ENCODE measurements at regions of chr7 and their contacts with region 1.

Region 1: DNA sequence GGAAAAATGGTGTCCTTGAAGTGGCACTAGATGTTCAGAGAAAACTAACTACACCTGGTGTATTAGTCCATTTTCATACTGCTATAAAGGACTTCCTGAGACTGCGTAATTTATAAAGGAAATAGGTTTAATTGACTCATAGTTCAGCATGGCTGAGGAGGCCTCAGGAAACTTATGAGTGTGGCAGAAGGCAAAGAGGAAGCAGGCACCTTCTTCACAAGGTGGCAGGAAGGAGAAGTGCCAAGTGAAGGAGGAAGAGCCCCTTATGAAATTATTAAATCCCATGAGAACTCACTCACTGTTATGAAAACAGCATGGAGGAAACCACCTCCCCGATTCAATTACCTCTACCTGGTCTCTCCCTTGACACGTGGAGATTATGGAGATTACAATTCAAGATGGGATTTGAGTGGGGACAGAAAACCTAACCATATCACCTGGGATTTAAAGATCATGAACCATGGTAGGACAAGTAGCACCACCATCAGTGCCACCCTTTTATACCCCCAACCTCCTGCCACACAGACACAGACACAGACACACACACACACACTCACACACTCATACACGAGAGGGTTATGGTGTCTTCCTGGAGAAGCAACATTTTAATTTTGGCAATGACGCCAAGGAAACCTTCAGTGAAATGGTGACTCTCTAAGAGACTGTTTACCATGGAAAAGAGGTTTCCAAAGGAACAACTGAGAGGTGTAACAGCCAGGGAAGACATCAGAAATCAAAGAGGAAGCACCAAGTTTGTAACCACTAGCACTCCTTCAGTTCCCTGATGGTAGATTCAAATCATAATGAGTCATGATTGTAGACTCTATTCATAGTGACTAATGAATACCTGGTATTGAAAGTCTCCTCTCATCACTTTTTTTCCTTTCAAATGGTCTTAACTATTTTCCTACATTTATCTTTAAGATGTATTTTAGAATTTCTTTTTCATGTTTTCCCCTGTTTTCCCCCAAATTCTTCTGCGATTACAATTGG is 41.8 kb upstream of the WNT16 start:
- DNase-seq: no peak
- ATAC-seq: peak; percentile 87
- H3K4me3 Mint-ChIP-seq: peak overlapping the region; percentile 41
- H3K27ac Mint-ChIP-seq: peak overlapping the region; percentile 89
- H3K4me1 Mint-ChIP-seq: peaks cover 27% of the 10 kb centered on the region
- H3K27me3 Mint-ChIP-seq: no peaks in the 10 kb centered on the region
- CTCF ChIP-seq: no peak

Region 2: DNA sequence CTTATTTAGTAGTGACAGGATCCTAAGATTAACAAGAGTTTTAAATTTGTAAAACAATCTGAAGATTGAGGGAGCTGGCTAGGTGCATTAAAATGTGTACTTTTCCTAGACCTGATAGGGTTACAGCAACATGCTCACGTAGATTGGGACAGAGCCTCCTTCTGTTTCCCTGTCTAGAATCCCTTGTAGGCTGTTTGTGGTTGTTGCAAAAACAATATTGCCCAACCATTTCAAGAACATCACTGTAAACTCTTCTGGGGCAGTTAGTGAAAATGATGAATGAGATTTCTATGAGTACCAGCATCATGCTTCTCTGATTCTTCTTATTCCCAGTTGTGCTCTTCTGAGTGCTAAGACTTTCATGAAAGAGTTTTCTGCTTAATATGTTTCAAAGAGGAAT is 313.2 kb before region 1 on chr7:
- CTCF ChIA-PET with region 1: no interaction called
- POLR2A ChIA-PET with region 1: no interaction called
- intact Hi-C with region 1: no loop called
- DNase-seq: no peak
- ATAC-seq: no peak
- H3K4me3 Mint-ChIP-seq: no peak overlapping the region
- H3K27ac Mint-ChIP-seq: no peak overlapping the region
- H3K4me1 Mint-ChIP-seq: no peaks in the 10 kb centered on the region
- H3K27me3 Mint-ChIP-seq: no peaks in the 10 kb centered on the region
- CTCF ChIP-seq: no peak

Region 3: DNA sequence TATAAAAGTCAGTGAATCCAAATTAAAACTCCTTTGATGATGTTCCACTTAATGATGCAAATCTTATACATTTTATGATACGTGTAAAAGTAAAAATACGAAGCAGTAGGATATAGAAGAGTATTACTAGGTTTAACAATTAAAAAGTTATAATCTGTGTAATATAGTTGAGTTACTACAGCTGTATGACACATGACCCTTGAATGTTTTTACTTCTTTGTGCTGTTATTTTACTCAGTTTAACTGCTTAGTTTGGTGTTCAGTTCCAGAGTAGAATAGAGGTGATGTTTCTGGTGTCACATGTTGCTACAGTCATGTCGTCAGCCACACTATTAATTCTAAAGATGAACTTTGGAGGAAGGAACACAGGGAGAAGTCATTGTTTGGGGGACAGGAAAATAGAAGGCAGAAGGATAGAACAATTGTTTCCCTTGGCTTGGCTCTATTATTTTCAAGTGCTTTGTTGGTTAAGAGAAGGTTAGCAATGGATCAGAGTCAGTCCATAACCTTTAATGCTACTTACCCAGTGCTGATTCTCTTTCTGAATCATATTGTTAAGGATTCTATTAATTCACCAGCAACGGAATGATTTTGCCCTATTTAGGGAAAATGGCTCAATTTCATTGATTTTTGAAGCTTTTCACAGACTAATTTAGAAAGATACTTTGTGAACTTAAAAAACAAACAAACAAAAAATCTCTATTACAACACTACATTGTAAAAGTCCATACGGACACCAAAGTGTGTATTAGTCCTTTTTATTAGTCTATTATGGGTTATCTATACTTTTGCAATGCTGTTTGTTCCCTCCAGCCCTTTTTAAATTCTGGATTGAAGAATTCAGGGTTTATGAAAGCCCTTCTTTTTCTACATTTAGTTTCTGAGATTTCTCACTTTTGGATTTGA is 225.1 kb before region 1 on chr7:
- CTCF ChIA-PET with region 1: no interaction called
- POLR2A ChIA-PET with region 1: no interaction called
- intact Hi-C with region 1: no loop called
- DNase-seq: no peak
- ATAC-seq: no peak
- H3K4me3 Mint-ChIP-seq: no peak overlapping the region
- H3K27ac Mint-ChIP-seq: no peak overlapping the region
- H3K4me1 Mint-ChIP-seq: no peaks in the 10 kb centered on the region
- H3K27me3 Mint-ChIP-seq: no peaks in the 10 kb centered on the region
- CTCF ChIP-seq: no peak

Region 4: DNA sequence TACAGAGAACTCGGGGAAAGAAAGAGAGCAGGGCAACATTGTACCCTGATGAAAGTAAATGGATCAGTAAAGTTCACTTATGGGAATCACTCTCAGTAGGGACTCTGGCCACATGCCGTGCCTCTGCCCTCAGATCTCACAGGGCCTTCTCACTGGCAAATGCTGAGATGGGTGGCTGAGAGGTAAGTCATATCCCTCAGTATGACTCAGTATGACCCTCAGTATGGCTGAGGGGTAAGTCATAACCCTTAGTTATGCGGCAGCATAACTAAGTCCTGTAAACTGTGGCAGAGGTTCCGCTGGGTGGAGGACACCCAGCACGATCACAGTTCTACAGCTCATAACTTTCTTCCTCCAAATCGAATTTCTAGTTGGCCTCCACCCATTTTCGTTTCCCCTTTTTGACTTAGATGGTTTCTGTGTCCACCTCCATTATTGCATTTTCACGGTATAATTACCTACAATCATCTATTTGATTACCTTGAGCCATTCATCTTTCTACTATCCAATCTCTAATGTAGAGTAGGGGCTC is 15.2 kb after region 1 on chr7:
- CTCF ChIA-PET with region 1: no interaction called
- POLR2A ChIA-PET with region 1: no interaction called
- intact Hi-C with region 1: loop called (anchors 2 kb)
- DNase-seq: no peak
- ATAC-seq: peak; percentile 97
- H3K4me3 Mint-ChIP-seq: peak overlapping the region; percentile 5
- H3K27ac Mint-ChIP-seq: peak overlapping the region; percentile 81
- H3K4me1 Mint-ChIP-seq: peaks cover 56% of the 10 kb centered on the region
- H3K27me3 Mint-ChIP-seq: no peaks in the 10 kb centered on the region
- CTCF ChIP-seq: no peak

Region 5: DNA sequence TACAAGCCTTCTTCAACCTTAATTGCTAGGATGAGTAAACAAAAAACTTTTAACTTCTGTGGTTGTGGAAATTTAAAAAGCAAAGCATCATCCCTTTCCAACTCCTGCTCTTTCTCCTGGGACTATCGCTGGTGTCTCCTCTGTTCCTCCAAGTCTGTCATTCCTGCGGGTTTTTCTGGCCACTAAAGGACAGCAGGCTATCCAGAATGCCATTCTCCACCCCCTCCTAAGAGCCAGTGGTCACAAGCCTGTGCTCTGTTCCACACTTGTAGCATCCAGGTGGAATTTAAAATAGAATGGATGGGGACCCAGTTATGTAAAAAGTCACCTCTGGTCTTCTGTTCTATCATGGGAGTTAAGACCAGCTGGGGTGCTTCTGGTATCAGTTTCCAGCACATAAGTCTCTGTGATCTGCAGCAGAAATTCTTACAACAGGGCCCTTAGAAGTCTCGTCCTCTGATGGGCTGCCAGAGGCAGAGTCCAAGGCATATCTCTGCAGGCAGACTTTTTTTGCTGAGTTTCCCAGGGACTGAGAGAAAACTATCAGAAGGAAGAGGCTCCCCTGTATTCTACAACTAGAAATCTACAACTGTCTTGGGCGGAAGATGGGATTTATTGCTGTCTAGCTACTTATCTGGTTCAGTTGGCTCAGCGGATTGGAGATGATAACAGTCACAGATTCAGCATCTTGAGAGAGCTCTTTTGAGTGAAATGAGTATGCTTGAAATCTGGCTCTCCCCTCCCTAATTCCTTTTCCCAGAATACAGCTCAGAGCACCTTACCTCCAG is 36.7 kb after region 1 on chr7:
- CTCF ChIA-PET with region 1: no interaction called
- POLR2A ChIA-PET with region 1: no interaction called
- intact Hi-C with region 1: no loop called
- DNase-seq: no peak
- ATAC-seq: no peak
- H3K4me3 Mint-ChIP-seq: no peak overlapping the region
- H3K27ac Mint-ChIP-seq: no peak overlapping the region
- H3K4me1 Mint-ChIP-seq: peaks cover 11% of the 10 kb centered on the region
- H3K27me3 Mint-ChIP-seq: peaks cover 3% of the 10 kb centered on the region
- CTCF ChIP-seq: no peak